SK-MEL-5 (cell line): ENCODE measurements at regions of chr5 and their contacts with region 1.

Region 1: GRCh38 chr5:142024771-142025304 is 12.0 kb upstream of the GNPDA1 start:
- DNase-seq: peak; percentile 94

Region 2: GRCh38 chr5:141590127-141590526 is 434.7 kb before region 1 on chr5:
- in situ Hi-C with region 1: no loop called
- DNase-seq: no peak

Region 3: DNA sequence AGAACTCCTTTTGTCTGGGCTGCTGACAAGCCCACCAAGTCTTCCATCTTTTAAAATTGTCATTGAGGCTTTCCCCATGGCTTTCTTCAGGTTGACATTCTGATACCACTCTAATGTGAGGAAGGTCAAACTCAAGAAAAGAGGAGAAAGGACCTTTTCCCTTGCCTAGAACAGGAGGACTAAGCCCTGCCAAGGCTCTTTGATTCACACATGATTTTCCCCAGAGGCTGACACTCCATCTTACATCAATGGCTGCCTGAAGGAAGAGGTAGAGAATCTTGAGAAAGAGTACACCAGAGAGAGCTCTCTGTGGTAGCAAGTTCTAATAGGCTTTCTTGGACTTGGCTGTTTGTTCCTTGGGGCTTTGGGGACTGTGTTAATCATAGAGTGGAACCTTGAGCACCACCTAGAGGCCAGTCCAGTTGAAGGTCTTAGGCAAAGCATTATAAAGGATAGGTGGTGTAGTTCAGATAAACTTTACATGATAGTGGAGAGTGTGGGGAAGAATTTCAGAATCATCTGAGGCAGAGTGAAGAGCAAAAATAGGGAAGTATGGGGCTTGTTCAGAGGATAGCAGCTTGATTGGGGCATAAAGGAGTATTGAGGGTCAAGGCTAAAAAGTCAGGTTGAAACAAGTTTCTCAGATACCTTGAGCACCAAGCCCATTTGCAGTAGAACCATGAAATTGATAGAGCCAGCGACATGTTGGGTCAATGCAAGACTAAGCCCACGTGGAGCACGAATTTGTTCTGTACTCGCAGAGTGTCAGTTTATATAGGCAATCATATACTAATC is 120.5 kb after region 1 on chr5:
- in situ Hi-C with region 1: loop called (anchors 25 kb)
- DNase-seq: peak; percentile 86